ENCODE measurements at regions of chr1 and their contacts with region 1.

Region 1: DNA sequence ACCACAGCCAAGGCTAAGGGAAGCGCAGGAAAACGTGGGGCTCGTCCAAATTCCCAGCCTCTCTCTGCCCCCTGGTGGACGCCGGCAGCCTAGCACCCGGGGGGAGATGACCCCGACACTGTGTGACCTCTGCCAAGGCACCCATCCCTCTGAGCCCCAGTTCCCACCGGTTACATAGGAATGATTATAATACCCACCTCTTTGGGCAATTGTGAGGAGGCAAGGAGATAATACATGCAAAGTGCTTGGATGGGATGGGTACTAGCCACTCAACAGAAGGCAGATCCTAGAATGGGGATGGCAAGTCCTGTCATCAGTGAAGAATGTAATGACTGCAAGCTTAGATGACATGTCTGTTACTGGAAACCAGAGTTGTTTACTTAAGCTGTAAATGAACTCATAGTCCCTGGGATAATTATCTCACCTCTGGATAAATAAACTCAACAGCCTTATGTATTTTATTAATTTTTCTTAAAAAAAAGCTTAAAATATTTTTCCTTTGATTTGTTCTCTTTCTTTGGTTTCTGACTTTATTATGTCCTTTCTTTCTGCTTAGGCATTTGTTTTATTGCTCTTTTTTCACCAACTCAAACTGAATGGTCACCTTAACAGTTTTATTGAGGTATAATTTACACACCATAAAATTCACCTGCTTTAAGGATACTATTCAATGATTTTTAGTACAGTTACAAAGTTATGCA is 11.3 kb upstream of the BMP8B start:
- DNase-seq: peak; percentile 81
- H3K4me3 Mint-ChIP-seq: peak overlapping the region; percentile 61
- H3K27ac Mint-ChIP-seq: peak overlapping the region; percentile 54
- H3K4me1 Mint-ChIP-seq: peaks cover 13% of the 10 kb centered on the region
- H3K27me3 Mint-ChIP-seq: no peaks in the 10 kb centered on the region

Region 2: GRCh38 chr1:39453603-39454002 is 346.3 kb before region 1 on chr1:
- CTCF ChIA-PET with region 1: no interaction called
- intact Hi-C with region 1: no loop called
- DNase-seq: no peak
- H3K4me3 Mint-ChIP-seq: no peak overlapping the region
- H3K27ac Mint-ChIP-seq: no peak overlapping the region
- H3K4me1 Mint-ChIP-seq: no peaks in the 10 kb centered on the region
- H3K27me3 Mint-ChIP-seq: no peaks in the 10 kb centered on the region

Region 3: DNA sequence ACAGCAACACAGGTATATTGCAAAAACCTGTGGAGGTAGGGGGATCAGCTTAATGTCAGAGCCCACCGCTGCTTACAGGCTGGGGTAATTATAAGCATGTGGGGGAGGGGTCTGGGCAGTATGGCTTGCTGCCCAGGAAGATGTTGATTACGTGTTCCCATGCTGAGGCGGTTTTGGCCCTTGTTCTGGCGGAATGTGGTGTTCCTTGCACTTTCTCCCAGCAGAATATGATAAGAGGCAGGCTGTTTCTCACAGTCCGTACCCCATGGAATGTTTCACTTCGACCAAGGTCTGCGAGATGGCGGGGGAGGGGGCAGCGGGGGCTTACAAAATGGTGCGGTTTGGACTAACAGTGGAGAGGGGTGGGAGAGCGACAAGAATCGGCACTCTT is 98.9 kb before region 1 on chr1:
- CTCF ChIA-PET with region 1: interaction called, 3 read pairs
- intact Hi-C with region 1: loop called (anchors 1 kb)
- DNase-seq: no peak
- H3K4me3 Mint-ChIP-seq: no peak overlapping the region
- H3K27ac Mint-ChIP-seq: no peak overlapping the region
- H3K4me1 Mint-ChIP-seq: no peaks in the 10 kb centered on the region
- H3K27me3 Mint-ChIP-seq: peaks cover 3% of the 10 kb centered on the region

Region 4: GRCh38 chr1:39738622-39739366 is 61.1 kb before region 1 on chr1 and contains the start of gene PPIE:
- CTCF ChIA-PET with region 1: interaction called, 7 read pairs
- intact Hi-C with region 1: loop called (anchors 10 kb)
- DNase-seq: peak; percentile 99
- H3K4me3 Mint-ChIP-seq: peak within 1 kb of the TSS; percentile 97
- H3K27ac Mint-ChIP-seq: peak within 1 kb of the TSS; percentile 90
- H3K4me1 Mint-ChIP-seq: peaks cover 26% of the 10 kb centered on the region
- H3K27me3 Mint-ChIP-seq: peaks cover 2% of the 10 kb centered on the region
- total RNA-seq, gene PPIE: 73.8 to 75.6 TPM

Region 5: DNA sequence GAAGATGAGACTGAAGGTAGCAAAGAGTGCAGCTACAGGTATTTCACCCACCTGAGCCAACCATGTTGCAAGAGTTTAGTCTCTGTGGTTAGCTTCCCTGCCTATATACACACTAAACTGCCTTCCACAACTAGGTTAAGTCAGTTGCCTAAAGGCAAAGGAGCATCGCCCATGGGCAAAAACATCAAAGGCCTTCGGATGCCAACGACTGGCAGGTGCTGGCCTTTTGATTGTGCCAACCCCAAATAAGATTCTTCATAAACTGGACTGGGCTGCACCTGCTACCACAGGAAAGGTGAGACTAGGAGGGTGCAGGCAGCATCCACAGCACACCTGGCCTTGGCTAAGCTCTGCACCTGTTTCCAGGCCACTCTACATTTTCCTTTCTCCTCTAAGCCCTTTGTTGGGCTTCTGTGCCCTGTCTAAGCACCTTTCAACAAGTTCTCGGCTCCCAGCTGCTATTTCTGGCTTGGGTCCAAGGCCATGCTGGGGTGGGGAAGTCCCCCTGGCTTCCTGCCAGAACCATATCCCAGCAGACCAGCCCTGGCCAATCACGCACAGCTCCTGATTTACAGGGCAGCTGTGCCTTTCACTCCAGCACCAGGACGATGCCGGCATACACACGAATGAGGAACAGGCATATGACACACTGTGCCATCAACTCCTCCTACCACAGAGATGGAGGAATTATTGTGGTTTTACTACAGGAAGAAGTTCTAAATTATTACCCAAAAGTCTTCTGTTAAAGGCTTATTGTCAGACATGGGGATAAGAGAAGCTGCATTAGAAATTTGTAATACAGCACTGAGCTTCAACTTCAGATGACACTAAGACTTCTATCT is 45.6 kb after region 1 on chr1:
- CTCF ChIA-PET with region 1: interaction called, 9 read pairs
- intact Hi-C with region 1: loop called (anchors 1 kb)
- DNase-seq: peak; percentile 94
- H3K4me3 Mint-ChIP-seq: no peak overlapping the region
- H3K27ac Mint-ChIP-seq: peak overlapping the region; percentile 87
- H3K4me1 Mint-ChIP-seq: peaks cover 52% of the 10 kb centered on the region
- H3K27me3 Mint-ChIP-seq: no peaks in the 10 kb centered on the region

Region 6: GRCh38 chr1:41474490-41475271 is 1674.8 kb after region 1 on chr1:
- CTCF ChIA-PET with region 1: no interaction called
- intact Hi-C with region 1: no loop called
- DNase-seq: no peak
- H3K4me3 Mint-ChIP-seq: no peak overlapping the region
- H3K27ac Mint-ChIP-seq: peak overlapping the region; percentile 19
- H3K4me1 Mint-ChIP-seq: no peaks in the 10 kb centered on the region
- H3K27me3 Mint-ChIP-seq: no peaks in the 10 kb centered on the region

Measured in activated naive CD4-positive, alpha-beta T cell treated with anti-CD3 and anti-CD28 coated beads for 36 hours (primary cell).